ENCODE measurements at regions of chr7 and their contacts with region 1.

Region 1: DNA sequence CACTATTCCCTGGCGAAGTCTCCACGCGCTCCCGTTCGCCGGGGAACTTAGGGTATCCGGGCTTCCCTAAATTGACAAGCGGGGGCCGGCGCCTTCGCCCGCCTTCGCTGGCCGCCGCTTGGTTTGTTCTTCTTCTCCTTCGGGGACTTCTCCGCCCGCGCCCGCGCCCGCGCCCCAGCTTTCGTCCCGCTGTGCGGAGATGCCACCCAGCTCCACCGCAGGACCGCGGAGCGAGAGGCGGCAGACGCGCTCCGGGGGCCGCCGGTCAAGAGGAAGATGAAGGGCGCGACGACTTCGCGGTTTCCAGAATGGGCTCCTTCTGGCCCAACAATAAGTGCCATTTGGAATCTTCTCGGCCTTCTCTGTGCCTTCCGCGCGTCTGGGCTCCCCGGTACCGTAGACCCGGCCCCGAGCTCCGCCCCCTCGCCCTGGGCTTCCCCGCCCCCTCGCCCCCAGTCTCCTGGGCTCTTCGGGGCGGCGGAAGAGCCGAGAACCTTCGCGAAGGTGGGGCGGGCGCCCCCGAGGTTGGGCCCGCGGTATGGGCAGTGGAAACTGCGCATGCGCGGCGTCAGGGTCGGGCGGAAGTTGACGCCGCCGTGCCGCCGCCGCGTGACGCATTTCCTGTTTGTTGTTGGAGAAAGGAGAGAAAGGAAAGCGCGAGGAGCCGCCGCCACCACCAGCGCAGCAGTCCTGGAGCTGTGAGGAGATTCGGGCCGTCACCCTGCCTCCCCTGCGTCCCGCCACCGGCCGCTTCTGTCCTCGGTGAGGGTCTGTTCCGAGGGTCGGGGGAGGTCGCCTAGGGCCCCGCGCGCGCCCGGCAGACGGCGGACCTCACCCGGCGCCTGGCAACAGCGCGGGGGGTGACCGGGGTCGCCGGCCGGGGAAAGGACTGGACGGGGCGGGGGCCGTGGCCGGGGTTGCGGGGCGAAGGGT is at the start of gene DNAJB6:
- DNase-seq: peak; percentile 90
- H3K4me3 Mint-ChIP-seq: peak within 1 kb of the TSS; percentile 79
- H3K27ac Mint-ChIP-seq: peak within 1 kb of the TSS; percentile 97
- H3K4me1 Mint-ChIP-seq: peaks cover 13% of the 10 kb centered on the region
- H3K27me3 Mint-ChIP-seq: no peaks in the 10 kb centered on the region
- CTCF ChIP-seq: no peak
- total RNA-seq, gene DNAJB6: 110 and 124 TPM in 2 replicates

Region 2: DNA sequence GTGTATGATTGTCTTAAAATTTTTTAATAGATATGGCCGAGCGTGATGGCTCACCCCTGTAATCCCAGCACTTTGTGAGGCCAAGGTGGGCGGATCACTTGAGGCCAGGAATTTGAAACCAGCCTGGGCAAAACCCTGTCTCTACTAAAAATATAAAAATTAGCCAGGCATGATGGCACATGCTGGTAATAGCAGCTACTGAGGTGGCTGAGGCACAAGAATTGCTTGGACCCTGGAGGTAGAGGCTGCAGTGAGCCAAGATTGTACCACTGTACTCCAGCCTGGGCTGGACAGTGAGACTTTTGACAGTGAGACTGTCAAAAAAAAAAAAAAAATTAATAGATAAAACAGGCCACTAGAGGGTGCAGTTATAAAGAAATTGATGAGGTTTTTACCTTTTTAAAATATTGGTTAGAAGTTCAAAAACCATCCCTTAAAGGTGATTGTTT is 366.7 kb before region 1 on chr7:
- CTCF ChIA-PET with region 1: interaction called, 3 read pairs
- POLR2A ChIA-PET with region 1: interaction called, 3 read pairs
- intact Hi-C with region 1: loop called (anchors 5 kb)
- DNase-seq: peak; percentile 40
- H3K4me3 Mint-ChIP-seq: no peak overlapping the region
- H3K27ac Mint-ChIP-seq: peak overlapping the region; percentile 49
- H3K4me1 Mint-ChIP-seq: peaks cover 8% of the 10 kb centered on the region
- H3K27me3 Mint-ChIP-seq: no peaks in the 10 kb centered on the region
- CTCF ChIP-seq: peak; percentile 42

Region 3: GRCh38 chr7:157125376-157126223 is 211.0 kb before region 1 on chr7:
- CTCF ChIA-PET with region 1: no interaction called
- POLR2A ChIA-PET with region 1: no interaction called
- intact Hi-C with region 1: no loop called
- DNase-seq: no peak
- H3K4me3 Mint-ChIP-seq: no peak overlapping the region
- H3K27ac Mint-ChIP-seq: no peak overlapping the region
- H3K4me1 Mint-ChIP-seq: no peaks in the 10 kb centered on the region
- H3K27me3 Mint-ChIP-seq: peaks cover 14% of the 10 kb centered on the region
- CTCF ChIP-seq: no peak

Region 4: DNA sequence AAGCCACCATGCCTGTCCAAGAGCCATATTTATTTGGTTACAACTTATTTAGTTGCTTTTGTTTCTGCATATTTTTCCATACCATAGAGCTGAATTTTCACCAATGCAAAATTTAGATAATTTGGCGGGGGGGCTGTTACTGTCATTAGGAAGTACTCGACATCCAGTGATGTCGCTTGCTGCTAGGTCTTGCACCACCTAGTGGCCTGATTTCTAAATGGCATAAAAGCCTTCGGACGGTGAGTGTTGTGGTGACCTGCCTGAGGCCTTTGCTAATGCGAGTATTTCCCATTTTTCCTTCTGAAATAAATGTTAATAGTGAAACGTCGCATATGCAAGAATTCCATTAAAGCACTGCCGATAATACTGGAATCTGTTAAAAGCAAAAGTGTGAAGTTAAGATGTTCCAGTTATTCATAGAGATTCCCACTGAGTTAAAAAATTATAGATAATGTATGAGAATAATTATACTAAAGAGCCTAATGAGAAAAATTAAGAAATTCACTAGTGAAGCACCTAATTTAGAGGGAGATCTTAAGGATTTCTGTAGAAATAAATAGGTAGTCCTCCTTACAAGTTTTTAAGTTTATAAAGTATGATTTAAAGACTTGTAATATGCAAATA is 85.9 kb before region 1 on chr7:
- CTCF ChIA-PET with region 1: interaction called, 29 read pairs
- POLR2A ChIA-PET with region 1: interaction called, 12 read pairs
- intact Hi-C with region 1: no loop called
- DNase-seq: peak; percentile 71
- H3K4me3 Mint-ChIP-seq: no peak overlapping the region
- H3K27ac Mint-ChIP-seq: no peak overlapping the region
- H3K4me1 Mint-ChIP-seq: no peaks in the 10 kb centered on the region
- H3K27me3 Mint-ChIP-seq: no peaks in the 10 kb centered on the region
- CTCF ChIP-seq: peak; percentile 68

Region 5: DNA sequence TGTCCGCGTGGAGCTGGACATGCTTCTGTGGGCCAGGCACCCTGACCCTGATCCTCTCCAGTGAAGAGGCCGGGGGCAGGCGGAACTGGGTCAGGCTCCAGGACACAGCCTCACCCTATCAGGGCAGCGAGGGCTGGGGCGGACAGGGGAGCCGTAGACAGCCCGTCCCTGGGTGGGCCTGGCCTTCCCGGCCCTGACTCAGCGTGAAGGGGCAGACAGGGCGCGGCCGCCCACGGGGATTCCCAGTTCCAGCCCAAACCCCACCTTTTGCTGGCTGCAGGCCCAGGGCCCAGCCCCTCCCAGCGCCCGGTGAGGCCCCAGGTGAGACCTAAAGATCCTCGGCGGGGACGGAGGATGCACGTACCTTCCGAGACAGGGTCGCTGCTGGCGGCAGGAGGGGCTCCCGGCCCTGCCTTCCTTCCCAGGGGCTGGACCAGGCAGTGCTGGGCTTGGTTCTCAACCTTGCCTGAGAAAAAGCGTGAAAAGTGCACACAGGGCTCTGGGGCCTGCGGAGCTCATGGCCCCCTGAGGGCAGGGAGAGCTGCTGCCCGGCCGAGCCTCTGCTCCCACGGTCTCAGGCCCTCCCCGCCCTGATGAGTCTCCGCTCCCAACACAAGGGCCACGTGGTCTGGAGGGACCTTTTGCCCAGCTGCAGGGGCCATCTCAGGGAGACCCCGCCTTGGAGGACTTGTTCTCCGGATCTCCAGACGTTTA is 43.8 kb before region 1 on chr7:
- CTCF ChIA-PET with region 1: interaction called, 5 read pairs
- POLR2A ChIA-PET with region 1: interaction called, 31 read pairs
- intact Hi-C with region 1: no loop called
- DNase-seq: peak; percentile 80
- H3K4me3 Mint-ChIP-seq: no peak overlapping the region
- H3K27ac Mint-ChIP-seq: peak overlapping the region; percentile 84
- H3K4me1 Mint-ChIP-seq: peaks cover 25% of the 10 kb centered on the region
- H3K27me3 Mint-ChIP-seq: no peaks in the 10 kb centered on the region
- CTCF ChIP-seq: no peak

Region 6: GRCh38 chr7:157318012-157318709 is 18.5 kb before region 1 on chr7:
- CTCF ChIA-PET with region 1: interaction called, 6 read pairs
- POLR2A ChIA-PET with region 1: interaction called, 48 read pairs
- intact Hi-C with region 1: no loop called
- DNase-seq: peak; percentile 54
- H3K4me3 Mint-ChIP-seq: no peak overlapping the region
- H3K27ac Mint-ChIP-seq: peak overlapping the region; percentile 91
- H3K4me1 Mint-ChIP-seq: peaks cover 6% of the 10 kb centered on the region
- H3K27me3 Mint-ChIP-seq: no peaks in the 10 kb centered on the region
- CTCF ChIP-seq: no peak

Region 7: GRCh38 chr7:157357129-157358040 is 20.7 kb after region 1 on chr7:
- CTCF ChIA-PET with region 1: interaction called, 6 read pairs
- POLR2A ChIA-PET with region 1: interaction called, 10 read pairs
- intact Hi-C with region 1: no loop called
- DNase-seq: no peak
- H3K4me3 Mint-ChIP-seq: no peak overlapping the region
- H3K27ac Mint-ChIP-seq: peak overlapping the region; percentile 61
- H3K4me1 Mint-ChIP-seq: peaks cover 48% of the 10 kb centered on the region
- H3K27me3 Mint-ChIP-seq: no peaks in the 10 kb centered on the region
- CTCF ChIP-seq: no peak